ENCODE measurements at regions of chr12 and their contacts with region 1.

Region 1: DNA sequence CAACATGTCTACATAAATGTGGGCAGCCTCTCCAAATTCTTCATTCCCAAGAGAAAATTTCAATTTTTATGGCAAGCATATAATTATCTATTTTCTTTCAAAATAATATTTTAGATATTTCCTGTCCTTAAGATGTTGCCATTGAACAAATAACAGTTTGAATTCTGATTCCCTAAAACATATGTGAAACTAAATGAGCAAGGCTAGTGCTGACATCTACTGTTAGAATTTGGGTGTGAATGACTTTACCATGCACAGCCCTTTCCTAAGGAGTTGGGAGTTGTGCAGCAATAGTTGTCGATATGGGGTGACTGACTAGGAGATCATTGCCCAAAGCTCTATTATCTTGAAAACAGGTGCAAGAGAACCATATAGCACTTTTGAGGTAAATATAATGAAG is 108.2 kb upstream of the SLC38A4 start:
- DNase-seq: no peak
- H3K4me3 ChIP-seq: no peak overlapping the region
- CTCF ChIP-seq: peak; percentile 56

Region 2: GRCh38 chr12:46438719-46439319 is 495.1 kb before region 1 on chr12:
- CTCF ChIA-PET with region 1: no interaction called
- POLR2A ChIA-PET with region 1: no interaction called
- DNase-seq: no peak
- H3K4me3 ChIP-seq: no peak overlapping the region
- CTCF ChIP-seq: no peak

Region 3: DNA sequence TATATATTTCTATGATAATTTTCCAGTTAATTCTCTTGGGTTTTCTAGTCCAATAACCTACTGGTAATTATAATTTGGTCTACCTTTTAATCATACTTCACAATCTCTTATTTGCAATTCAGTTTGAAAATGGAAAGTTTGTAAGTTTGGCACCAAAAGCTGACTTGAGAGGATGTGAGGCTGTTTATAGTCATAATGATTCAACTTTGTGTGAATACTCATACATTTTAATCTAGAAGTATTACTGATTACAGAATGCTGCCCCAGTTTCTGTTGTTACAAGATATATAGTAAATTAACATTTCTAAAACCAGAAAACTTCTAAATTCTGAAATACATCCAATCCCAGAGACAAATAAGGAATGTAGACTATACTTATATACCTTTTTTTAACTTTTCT is 266.4 kb before region 1 on chr12:
- CTCF ChIA-PET with region 1: interaction called, 159 read pairs
- POLR2A ChIA-PET with region 1: no interaction called
- DNase-seq: no peak
- H3K4me3 ChIP-seq: no peak overlapping the region
- CTCF ChIP-seq: no peak

Region 4: GRCh38 chr12:46886541-46887041 is 47.4 kb before region 1 on chr12:
- CTCF ChIA-PET with region 1: interaction called, 15 read pairs
- POLR2A ChIA-PET with region 1: no interaction called
- DNase-seq: peak; percentile 88
- H3K4me3 ChIP-seq: no peak overlapping the region
- CTCF ChIP-seq: no peak

Region 5: GRCh38 chr12:46944088-46944487 is 10.1 kb after region 1 on chr12:
- CTCF ChIA-PET with region 1: interaction called, 26 read pairs
- POLR2A ChIA-PET with region 1: no interaction called
- DNase-seq: no peak
- H3K4me3 ChIP-seq: no peak overlapping the region
- CTCF ChIP-seq: peak; percentile 34

Region 6: GRCh38 chr12:46983393-46984266 is 49.7 kb after region 1 on chr12:
- CTCF ChIA-PET with region 1: interaction called, 13 read pairs
- POLR2A ChIA-PET with region 1: no interaction called
- DNase-seq: no peak
- H3K4me3 ChIP-seq: no peak overlapping the region
- CTCF ChIP-seq: peak; percentile 81

Region 7: GRCh38 chr12:47054659-47055058 is 120.7 kb after region 1 on chr12:
- CTCF ChIA-PET with region 1: no interaction called
- POLR2A ChIA-PET with region 1: no interaction called
- DNase-seq: no peak
- H3K4me3 ChIP-seq: no peak overlapping the region
- CTCF ChIP-seq: no peak

Region 8: GRCh38 chr12:47079468-47079980 is 145.6 kb after region 1 on chr12 and contains the starts of genes AMIGO2 and PCED1B:
- CTCF ChIA-PET with region 1: no interaction called
- POLR2A ChIA-PET with region 1: no interaction called
- DNase-seq: no peak
- H3K4me3 ChIP-seq: peak within 1 kb of the TSS; percentile 85
- CTCF ChIP-seq: peak; percentile 50

Measured in AG04449 (cell line).